ENCODE measurements at regions of chrX and their contacts with region 1.

Region 1: DNA sequence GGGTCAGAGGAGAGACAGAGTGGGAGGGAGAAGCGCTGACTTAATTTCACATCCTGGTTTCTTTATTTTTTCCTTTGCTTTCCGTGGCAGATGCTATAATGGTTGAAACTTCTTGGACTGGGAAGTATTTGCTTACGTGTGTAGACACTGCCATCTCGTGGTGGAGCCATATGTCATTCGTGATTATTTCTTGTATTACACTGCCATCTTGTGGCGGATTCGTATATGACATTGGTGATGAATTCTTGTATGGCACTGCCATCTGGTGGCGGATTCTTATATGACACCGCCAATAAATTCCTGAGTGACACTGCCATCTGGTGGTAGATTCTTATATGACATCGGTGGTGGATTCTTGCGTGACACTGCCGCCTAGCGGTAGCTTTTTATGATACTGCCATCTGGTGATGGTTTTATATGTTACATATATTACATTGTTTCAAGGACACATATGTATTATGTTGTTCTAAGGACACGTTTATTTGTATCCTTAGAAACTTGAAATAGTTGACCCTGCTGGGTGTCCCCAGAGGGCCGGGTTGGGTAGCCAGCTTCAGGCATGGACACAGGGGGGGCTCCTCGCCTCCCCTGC is 37.3 kb upstream of the CLCN4 start:
- DNase-seq: peak in 1 of 3 donors; percentile 87
- ATAC-seq: peak; percentile 99
- H3K4me3 ChIP-seq: no peak overlapping the region
- H3K4me1 ChIP-seq: peaks cover 2% of the 10 kb centered on the region
- CTCF ChIP-seq: peak; percentile 94

Region 2: DNA sequence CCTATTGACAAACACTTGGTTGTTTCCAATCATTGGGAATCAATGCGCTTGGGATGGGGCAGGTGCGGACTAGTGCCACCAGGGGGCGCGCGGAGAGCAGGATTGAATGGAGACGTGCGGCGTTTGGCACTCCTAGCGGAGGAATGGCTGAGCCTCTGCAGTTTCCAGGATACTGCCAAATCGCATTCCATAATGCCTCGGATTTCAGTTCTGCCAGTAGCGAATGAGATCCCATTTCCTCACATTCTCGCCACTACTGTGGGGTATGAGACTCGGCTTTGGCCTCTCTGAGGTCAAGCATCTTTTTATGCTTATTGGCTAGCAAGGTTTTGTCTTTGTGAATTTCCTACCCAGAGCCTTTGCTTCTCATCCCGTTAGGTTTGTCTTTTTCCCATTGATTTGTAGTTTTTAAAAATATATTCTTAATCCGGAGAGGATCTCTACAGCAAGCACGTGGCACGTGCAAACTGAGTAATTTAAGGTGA is 123.6 kb before region 1 on chrX:
- intact Hi-C with region 1: loop called (anchors 5 kb)
- DNase-seq: peak; percentile 80 to 86 (median 83)
- ATAC-seq: peak; percentile 98
- H3K4me3 ChIP-seq: no peak overlapping the region
- H3K4me1 ChIP-seq: no peaks in the 10 kb centered on the region
- CTCF ChIP-seq: peak; percentile 73

Measured in mucosa of descending colon (tissue), 3 donors.